MCF 10A (cell line): ENCODE measurements at regions of chr17 and their contacts with region 1.

Region 1: DNA sequence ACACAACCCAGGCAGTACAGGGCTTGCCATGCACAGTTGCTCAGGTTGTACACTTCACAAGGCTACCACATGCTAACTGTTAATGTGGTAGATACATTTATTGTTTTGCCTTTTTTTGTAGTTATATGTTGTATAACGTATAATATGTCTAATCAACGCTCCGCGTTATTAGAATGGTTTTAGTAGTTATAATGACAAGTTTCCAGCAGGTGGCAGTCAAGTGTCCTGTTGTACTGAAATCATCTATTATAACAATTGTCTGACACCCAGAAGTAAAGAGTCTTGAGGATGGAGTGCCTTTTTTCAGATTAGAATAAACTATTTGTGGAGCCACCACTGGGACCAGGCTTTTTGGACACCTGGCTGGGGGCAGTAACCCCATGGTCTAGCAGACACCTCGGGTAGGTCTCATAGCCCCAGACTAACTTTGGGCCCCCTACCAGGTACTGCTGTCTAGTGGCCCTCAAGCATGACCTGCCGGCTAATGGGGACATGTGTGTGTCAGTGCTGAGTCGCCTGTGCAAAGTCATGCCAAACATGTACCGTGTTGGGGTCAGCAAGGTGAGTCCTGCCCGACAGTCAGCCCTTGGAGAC is 32.8 kb downstream of the MYO15A start:
- DNase-seq: peak; percentile 71
- H3K4me3 Mint-ChIP-seq: no peak overlapping the region
- H3K27ac Mint-ChIP-seq: no peak overlapping the region
- H3K4me1 Mint-ChIP-seq: no peaks in the 10 kb centered on the region
- H3K27me3 Mint-ChIP-seq: no peaks in the 10 kb centered on the region
- CTCF ChIP-seq: peak; percentile 39

Region 2: DNA sequence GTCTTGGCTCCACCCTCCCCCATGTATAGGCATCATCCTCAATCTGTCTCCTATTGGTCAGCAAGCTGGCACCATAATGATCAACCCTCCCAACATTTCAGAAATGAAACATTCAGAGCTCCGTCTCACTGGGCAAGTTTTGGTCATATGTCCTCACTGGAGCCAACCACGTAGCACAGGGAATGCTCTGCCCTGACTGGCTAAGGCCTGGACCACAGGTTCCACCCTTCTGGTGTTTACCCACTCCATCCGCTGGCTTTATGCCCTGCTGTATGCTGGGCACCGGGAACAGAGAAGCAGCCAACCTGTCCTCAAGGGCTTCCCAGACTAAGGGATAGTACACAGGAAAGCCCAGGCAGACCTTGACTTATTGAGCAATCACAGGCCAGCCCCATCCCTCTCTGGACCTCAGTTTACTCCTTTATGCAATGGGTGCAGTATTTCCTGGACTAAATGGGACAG is 12.2 kb before region 1 on chr17:
- CTCF ChIA-PET with region 1: interaction called, 10 read pairs
- POLR2A ChIA-PET with region 1: no interaction called
- intact Hi-C with region 1: no loop called
- DNase-seq: peak; percentile 77
- H3K4me3 Mint-ChIP-seq: no peak overlapping the region
- H3K27ac Mint-ChIP-seq: no peak overlapping the region
- H3K4me1 Mint-ChIP-seq: no peaks in the 10 kb centered on the region
- H3K27me3 Mint-ChIP-seq: no peaks in the 10 kb centered on the region
- CTCF ChIP-seq: no peak

Region 3: GRCh38 chr17:18153749-18154161 is 12.4 kb after region 1 on chr17:
- CTCF ChIA-PET with region 1: interaction called, 25 read pairs
- POLR2A ChIA-PET with region 1: interaction called, 5 read pairs
- intact Hi-C with region 1: no loop called
- DNase-seq: peak; percentile 89
- H3K4me3 Mint-ChIP-seq: peak overlapping the region; percentile 73
- H3K27ac Mint-ChIP-seq: peak overlapping the region; percentile 73
- H3K4me1 Mint-ChIP-seq: peaks cover 12% of the 10 kb centered on the region
- H3K27me3 Mint-ChIP-seq: no peaks in the 10 kb centered on the region
- CTCF ChIP-seq: no peak

Region 4: DNA sequence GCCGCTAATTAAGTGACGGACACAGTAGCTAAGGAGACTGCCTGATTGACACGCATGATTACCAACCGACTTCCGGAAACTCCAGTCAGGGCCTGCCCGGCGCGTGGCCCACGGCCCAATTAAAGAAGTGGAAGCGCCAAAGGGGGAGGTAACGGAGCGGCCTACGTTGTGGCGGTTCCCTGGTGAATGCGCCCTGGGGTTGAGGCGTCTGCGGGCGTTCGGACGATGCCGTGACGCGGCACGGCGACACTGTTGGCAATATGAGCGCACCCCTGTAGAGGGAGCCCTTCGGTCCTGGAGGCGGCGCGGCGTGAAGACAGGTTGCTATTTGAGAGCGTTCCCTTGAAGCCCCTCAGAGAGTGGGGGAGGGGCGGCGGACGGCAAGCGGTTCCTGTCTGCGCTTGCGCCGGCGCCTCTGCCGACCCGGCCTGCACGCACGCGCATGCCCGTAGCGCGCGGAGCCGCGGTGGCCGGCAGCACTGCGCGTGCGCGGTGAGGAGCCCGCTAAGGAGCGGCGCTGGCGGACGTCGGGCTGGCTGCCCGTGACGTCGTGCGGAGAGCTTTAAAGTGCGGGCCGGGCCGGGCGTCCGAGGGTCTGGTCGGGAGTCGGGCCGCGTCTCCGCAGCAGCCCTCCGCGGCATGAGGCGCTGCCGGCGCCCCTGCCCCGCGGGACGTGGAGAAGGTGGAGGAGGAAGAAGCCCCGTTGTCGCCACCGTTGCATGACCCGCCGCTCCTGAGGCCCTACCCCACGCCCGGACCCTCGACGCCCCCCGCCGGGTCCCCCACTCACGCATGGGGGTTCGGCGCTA is 42.2 kb after region 1 on chr17 and contains the start of gene ALKBH5:
- CTCF ChIA-PET with region 1: interaction called, 3 read pairs
- POLR2A ChIA-PET with region 1: interaction called, 5 read pairs
- intact Hi-C with region 1: loop called (anchors 1 kb)
- DNase-seq: peak; percentile 99
- H3K4me3 Mint-ChIP-seq: peak within 1 kb of the TSS; percentile 95
- H3K27ac Mint-ChIP-seq: peak within 1 kb of the TSS; percentile 92
- H3K4me1 Mint-ChIP-seq: peaks cover 30% of the 10 kb centered on the region
- H3K27me3 Mint-ChIP-seq: no peaks in the 10 kb centered on the region
- CTCF ChIP-seq: peak; percentile 21
- total RNA-seq, gene ALKBH5: 69.5 and 85.1 TPM in 2 replicates

Region 5: GRCh38 chr17:18191967-18192366 is 50.7 kb after region 1 on chr17:
- CTCF ChIA-PET with region 1: interaction called, 6 read pairs
- POLR2A ChIA-PET with region 1: no interaction called
- intact Hi-C with region 1: loop called (anchors 1 kb)
- DNase-seq: no peak
- H3K4me3 Mint-ChIP-seq: no peak overlapping the region
- H3K27ac Mint-ChIP-seq: no peak overlapping the region
- H3K4me1 Mint-ChIP-seq: peaks cover 21% of the 10 kb centered on the region
- H3K27me3 Mint-ChIP-seq: no peaks in the 10 kb centered on the region
- CTCF ChIP-seq: peak; percentile 8

Region 6: GRCh38 chr17:18217412-18218015 is 76.2 kb after region 1 on chr17:
- CTCF ChIA-PET with region 1: interaction called, 3 read pairs
- POLR2A ChIA-PET with region 1: no interaction called
- intact Hi-C with region 1: loop called (anchors 10 kb)
- DNase-seq: peak; percentile 72
- H3K4me3 Mint-ChIP-seq: no peak overlapping the region
- H3K27ac Mint-ChIP-seq: no peak overlapping the region
- H3K4me1 Mint-ChIP-seq: peaks cover 4% of the 10 kb centered on the region
- H3K27me3 Mint-ChIP-seq: no peaks in the 10 kb centered on the region
- CTCF ChIP-seq: peak; percentile 88